ENCODE measurements at regions of chr16 and their contacts with region 1.

Region 1: DNA sequence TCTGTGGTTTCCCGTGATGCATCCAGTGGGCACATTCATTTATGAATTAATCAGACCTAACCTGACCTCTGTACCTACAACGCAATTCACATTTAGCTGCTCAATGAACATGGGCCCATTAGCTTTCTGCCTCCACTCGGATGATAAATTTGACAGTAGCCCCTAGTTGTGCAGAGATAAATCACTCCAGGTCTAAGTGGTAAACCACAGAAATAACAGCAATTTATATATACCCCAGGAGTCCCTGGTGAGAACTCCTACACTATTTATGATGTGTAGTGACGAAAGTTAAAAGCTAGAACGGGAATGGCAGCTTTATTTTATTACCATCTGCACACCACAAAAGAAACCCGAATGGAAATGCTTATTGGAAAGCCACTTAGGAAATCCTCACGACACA is 371.5 kb downstream of the HAPSTR1 start:
- DNase-seq: no peak
- ATAC-seq: no peak
- H3K4me3 ChIP-seq: no peak overlapping the region
- H3K27ac ChIP-seq: no peak overlapping the region
- H3K4me1 ChIP-seq: no peaks in the 10 kb centered on the region
- H3K27me3 ChIP-seq: peaks cover 18% of the 10 kb centered on the region; the same call in 1 of the 2 replicates
- CTCF ChIP-seq: no peak

Region 2: GRCh38 chr16:9176547-9177418 is 286.2 kb before region 1 on chr16:
- CTCF ChIA-PET with region 1: no interaction called
- POLR2A ChIA-PET with region 1: interaction called, 10 read pairs
- in situ Hi-C with region 1: no loop called
- intact Hi-C with region 1: no loop called
- DNase-seq: no peak
- ATAC-seq: peak; percentile 57; the same call in 1 of the 2 replicates
- H3K4me3 ChIP-seq: no peak overlapping the region
- H3K27ac ChIP-seq: no peak overlapping the region
- H3K4me1 ChIP-seq: no peaks in the 10 kb centered on the region
- H3K27me3 ChIP-seq: no peaks in the 10 kb centered on the region
- CTCF ChIP-seq: no peak

Region 3: DNA sequence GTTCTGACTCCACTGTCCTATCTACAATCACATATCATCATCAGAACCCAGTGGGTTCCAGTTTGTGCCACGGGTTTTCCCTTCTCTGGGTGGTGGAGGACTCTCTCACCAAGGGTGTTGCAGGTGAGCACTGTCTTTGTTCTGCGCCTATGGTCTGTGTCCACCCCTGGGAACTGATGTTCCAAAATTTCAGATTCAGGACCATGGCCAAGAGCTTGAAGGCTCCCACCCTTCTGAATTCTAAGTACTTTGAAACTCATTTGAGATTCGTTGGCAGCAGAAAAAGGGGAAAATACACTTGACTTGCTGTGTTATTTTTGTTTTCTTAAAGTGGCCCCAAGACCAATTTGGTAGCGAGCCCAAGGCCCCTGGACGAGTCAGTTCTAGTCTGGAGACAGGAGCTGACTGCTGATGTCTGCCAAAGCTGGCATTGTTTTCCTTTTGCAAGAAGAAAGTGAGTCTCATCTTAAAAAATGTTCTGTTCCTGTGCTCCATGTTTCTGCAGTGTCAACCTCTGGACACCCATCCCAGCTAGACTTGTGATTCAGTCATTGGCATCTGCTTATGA is 60.6 kb before region 1 on chr16:
- CTCF ChIA-PET with region 1: no interaction called
- POLR2A ChIA-PET with region 1: no interaction called
- in situ Hi-C with region 1: no loop called
- intact Hi-C with region 1: no loop called
- DNase-seq: no peak
- ATAC-seq: no peak
- H3K4me3 ChIP-seq: no peak overlapping the region
- H3K27ac ChIP-seq: no peak overlapping the region
- H3K4me1 ChIP-seq: no peaks in the 10 kb centered on the region
- H3K27me3 ChIP-seq: peaks cover 13% of the 10 kb centered on the region; the same call in 1 of the 2 replicates
- CTCF ChIP-seq: no peak

Region 4: GRCh38 chr16:9415548-9415947 is 47.4 kb before region 1 on chr16:
- CTCF ChIA-PET with region 1: no interaction called
- POLR2A ChIA-PET with region 1: no interaction called
- in situ Hi-C with region 1: no loop called
- intact Hi-C with region 1: no loop called
- DNase-seq: no peak
- ATAC-seq: no peak
- H3K4me3 ChIP-seq: no peak overlapping the region
- H3K27ac ChIP-seq: no peak overlapping the region
- H3K4me1 ChIP-seq: no peaks in the 10 kb centered on the region
- H3K27me3 ChIP-seq: peaks cover 8% of the 10 kb centered on the region; the same call in 1 of the 2 replicates
- CTCF ChIP-seq: no peak

Region 5: GRCh38 chr16:9778849-9779248 is 315.9 kb after region 1 on chr16:
- CTCF ChIA-PET with region 1: no interaction called
- POLR2A ChIA-PET with region 1: no interaction called
- in situ Hi-C with region 1: no loop called
- intact Hi-C with region 1: no loop called
- DNase-seq: no peak
- ATAC-seq: no peak
- H3K4me3 ChIP-seq: no peak overlapping the region
- H3K27ac ChIP-seq: no peak overlapping the region
- H3K4me1 ChIP-seq: no peaks in the 10 kb centered on the region
- H3K27me3 ChIP-seq: no peaks in the 10 kb centered on the region
- CTCF ChIP-seq: no peak

Measured in Panc1 (cell line).